ENCODE measurements at regions of chr16 and their contacts with region 1.

Region 1: DNA sequence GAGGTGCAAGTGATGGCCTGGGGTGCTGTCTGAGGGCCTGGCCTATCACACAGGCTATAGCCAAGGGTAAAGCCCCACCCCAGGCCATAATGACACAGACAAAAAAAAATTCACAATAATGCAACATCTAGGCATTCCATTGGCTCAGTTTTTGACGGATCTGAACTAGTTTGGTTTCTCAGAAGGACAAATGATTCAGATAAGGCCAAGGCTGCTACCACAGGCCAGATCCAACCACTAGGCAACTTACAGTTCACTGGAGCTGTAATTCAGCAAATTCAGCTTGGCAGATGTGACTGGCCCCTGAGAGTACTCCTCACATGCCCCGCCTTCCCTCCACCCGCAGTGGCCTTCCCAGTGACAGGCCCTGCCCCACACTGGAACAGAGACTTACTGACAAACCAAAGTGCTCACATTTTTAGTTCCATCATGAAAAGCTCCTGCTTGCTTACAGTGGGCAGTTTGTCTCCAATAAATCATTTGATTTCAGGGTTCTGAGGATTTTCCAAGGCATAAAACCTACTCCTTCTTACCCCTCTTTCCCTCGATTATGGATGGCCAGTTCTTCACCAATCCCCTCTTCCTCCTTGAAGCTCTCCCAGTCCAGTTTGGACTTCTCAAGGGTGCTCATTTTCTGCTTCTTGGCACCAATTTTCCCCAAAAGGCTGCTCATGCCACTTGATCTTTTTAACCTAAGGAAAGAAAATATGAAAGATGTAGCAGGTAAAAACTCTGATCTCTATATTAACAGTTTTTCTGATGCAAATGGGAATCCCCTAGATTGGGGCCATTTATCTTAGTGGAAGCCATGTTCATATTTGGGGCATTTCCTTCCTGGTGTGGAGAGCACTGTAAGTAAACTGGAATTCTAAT is 53.3 kb upstream of the BCAR1 start:
- DNase-seq: peak in 8 of 10 donors; percentile 32 to 96 (median 66)

Region 2: GRCh38 chr16:74862741-74863244 is 441.9 kb before region 1 on chr16:
- intact Hi-C with region 1: no loop called
- DNase-seq: peak in 1 of 10 donors; percentile 15

Region 3: GRCh38 chr16:75265845-75266701 is 38.7 kb before region 1 on chr16:
- intact Hi-C with region 1: loop called (anchors 5 kb)
- DNase-seq: peak in 7 of 10 donors; percentile 66 to 96 (median 75)

Region 4: GRCh38 chr16:76157629-76158028 is 852.9 kb after region 1 on chr16:
- intact Hi-C with region 1: no loop called
- DNase-seq: no peak